Activated CD4-positive, alpha-beta T cell treated with anti-CD3 and anti-CD28 coated beads, Interleukin-2, amount 10 ng/mL, durations not matched to agents 24 days and 14 days (primary cell): ENCODE measurements at regions of chr7 and their contacts with region 1.

Region 1: GRCh38 chr7:100478966-100479665 is at the start of gene TSC22D4:
- DNase-seq: peak; percentile 96
- H3K4me3 Mint-ChIP-seq: peak within 1 kb of the TSS; percentile 92
- H3K27ac Mint-ChIP-seq: peak within 1 kb of the TSS; percentile 88
- H3K4me1 Mint-ChIP-seq: peaks cover 35% of the 10 kb centered on the region
- H3K27me3 Mint-ChIP-seq: no peaks in the 10 kb centered on the region
- total RNA-seq, gene TSC22D4: 113 and 121 TPM in 2 replicates

Region 2: DNA sequence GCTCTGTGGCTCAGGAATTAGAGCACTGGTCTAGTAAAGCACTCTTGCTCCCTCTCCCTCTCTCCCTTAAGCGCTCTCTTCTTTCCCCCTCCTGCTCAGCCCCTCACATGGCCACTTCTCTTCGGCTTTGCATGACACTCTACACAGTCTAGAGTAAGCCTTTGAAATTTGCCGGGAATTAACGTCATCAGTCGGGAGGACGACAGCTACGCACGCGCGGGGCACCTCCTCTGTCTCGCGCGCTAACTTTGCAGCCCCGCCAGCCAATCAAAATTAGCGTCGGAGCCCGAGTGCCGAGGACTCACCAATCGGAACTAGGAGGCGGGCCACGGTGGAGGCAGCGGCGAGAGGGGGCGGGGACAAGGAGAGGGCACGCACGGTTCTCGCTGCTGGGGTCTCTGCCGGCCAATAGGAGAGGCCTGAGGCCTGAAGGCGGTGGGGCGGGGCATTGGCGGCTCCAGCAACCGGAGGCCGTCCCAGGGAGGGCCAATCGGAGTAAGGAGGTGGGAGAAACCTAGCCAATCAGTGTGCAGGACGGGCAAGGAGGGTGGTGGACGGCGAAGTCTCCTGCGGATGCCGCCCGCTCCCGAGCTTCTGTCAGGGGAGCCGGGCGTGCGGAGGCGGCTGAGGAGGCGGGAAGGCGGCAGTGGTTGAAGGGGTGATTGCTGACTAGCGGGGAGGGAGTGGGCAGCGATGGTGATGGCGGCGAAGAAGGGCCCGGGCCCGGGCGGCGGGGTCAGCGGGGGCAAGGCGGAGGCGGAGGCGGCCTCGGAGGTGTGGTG is 59.7 kb after region 1 on chr7 and contains the start of gene AGFG2:
- intact Hi-C with region 1: loop called (anchors 1 kb)
- DNase-seq: peak; percentile 100
- H3K4me3 Mint-ChIP-seq: peak within 1 kb of the TSS; percentile 99
- H3K27ac Mint-ChIP-seq: peak within 1 kb of the TSS; percentile 99
- H3K4me1 Mint-ChIP-seq: peaks cover 46% of the 10 kb centered on the region
- H3K27me3 Mint-ChIP-seq: no peaks in the 10 kb centered on the region
- total RNA-seq, gene AGFG2: 112 and 114 TPM in 2 replicates

Region 3: GRCh38 chr7:100545360-100546128 is 66.4 kb after region 1 on chr7:
- intact Hi-C with region 1: loop called (anchors 1 kb)
- DNase-seq: peak; percentile 79
- H3K4me3 Mint-ChIP-seq: peak overlapping the region; percentile 99
- H3K27ac Mint-ChIP-seq: peak overlapping the region; percentile 99
- H3K4me1 Mint-ChIP-seq: peaks cover 83% of the 10 kb centered on the region
- H3K27me3 Mint-ChIP-seq: no peaks in the 10 kb centered on the region

Region 4: DNA sequence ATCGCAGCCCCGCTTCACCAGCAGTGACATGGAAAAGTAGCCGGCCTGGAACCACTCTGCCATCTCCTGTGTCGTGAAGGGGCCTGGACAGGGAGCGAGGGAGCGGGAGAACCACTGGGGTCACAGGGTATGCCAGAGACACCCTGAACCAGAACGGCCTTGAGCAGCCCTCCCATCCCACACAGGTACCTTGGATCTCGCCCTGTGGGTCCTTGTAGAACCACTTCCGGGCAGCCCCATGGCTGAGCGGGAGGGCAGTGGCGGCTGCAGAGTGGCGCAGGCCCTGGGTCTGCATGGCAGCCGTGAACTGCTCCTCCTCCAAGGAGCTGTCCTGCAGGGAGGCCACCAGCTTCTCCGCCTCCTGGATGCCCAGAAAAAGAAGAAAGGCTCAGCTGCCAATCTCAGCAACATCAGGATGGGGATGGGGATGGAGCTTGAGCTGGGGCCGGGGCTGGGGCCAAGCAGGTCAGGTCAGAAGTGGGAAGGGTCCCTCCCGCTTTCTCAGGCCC is 205.5 kb after region 1 on chr7:
- intact Hi-C with region 1: no loop called
- DNase-seq: no peak
- H3K4me3 Mint-ChIP-seq: no peak overlapping the region
- H3K27ac Mint-ChIP-seq: no peak overlapping the region
- H3K4me1 Mint-ChIP-seq: peaks cover 6% of the 10 kb centered on the region
- H3K27me3 Mint-ChIP-seq: no peaks in the 10 kb centered on the region